Posterior vena cava (tissue), 2 donors: ENCODE measurements at regions of chr4 and their contacts with region 1.

Region 1: DNA sequence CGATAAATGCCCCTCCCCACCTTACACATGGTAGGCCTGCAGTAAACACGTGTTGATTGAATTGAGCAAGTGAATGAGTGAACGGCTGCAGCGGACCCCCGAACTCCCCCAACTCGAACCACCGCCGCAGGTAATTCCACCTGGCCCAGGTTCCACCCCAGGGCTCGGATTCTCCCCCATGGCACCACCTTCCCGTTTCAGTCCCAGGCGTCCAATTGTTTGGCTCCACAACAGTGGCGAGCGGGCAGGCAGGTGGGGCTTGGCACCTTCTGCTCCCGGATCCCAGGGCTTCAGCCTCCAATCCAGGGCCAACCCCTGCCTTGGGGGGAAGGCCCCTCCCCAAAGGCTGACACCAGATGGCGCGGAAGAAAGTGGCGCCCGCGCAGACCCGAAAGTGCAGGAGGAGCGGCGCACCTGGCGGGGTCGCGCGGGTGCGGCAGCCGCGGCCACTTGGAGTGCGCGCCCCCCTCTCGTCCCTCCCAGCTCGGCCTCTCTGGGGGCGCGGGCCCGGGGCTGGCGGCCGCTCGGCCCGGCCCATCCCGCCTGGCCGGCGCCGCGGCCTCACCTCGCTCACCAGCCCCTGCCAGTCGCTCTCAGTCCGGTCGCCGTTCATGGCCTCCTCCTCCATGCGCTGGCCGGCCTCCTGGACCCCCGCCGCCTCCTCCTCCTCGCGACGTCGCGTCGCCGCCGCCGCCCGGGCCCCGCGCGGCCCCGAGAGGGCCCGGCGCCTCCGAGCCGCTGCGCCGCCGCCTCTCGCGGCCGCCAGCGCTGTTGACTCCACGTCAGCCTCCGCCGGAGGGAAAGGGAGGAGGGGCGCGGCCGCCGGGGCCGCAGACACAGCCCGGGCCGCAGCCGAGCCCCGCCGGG is at the start of gene CCDC149:
- DNase-seq: peak; percentile 87
- total RNA-seq, gene CCDC149: 30.9 to 36.4 TPM

Region 2: GRCh38 chr4:24809376-24809775 is 103.1 kb before region 1 on chr4:
- intact Hi-C with region 1: loop called in 1 of 2 experiments (anchors 10 kb)
- DNase-seq: no peak

Region 3: GRCh38 chr4:24856586-24856985 is 55.9 kb before region 1 on chr4:
- intact Hi-C with region 1: loop called in 1 of 2 experiments (anchors 10 kb)
- DNase-seq: no peak

Region 4: GRCh38 chr4:24965627-24966026 is 53.1 kb after region 1 on chr4:
- intact Hi-C with region 1: loop called in 1 of 2 experiments (anchors 10 kb)
- DNase-seq: no peak

Region 5: DNA sequence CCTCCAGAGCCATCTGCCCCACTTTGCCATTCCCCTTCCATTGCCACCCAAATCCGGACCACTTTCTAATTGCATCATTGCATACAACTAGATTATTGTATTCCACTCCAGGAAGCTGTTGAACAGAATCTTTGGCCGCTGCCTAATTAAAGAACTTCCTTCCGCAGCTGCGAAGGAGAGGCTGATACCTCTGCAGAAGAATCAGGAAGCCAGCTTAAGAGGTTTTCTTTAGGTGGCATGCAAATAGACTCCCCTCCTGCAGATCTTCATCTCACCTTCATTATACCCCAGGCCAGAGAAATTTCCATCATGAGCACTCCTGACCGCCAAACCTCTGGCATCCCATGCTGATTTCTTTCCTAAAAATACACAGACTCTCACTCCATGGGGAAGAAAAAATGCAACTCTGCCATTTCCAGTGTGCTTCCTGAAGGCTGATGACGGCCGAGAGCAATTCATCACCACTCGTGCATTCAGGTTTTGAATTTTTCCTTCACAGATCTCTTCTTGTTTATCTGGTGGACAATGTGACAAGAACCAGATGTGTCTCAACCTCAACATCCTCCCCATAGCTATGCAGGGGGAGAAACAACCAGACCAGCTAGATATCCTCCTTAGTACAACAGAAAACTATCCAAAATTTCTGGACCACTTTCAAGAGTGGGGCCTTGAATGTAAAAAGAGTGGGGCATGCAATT is 87.1 kb after region 1 on chr4:
- intact Hi-C with region 1: no loop called
- DNase-seq: no peak